Activated B cell treated with CpG ODN at 0.5 μM for 24 hours (primary cell): ENCODE measurements at regions of chr1 and their contacts with region 1.

Region 1: GRCh38 chr1:179081687-179082332 is at the start of gene TOR3A:
- DNase-seq: peak; percentile 82
- ATAC-seq: peak; percentile 79
- H3K4me3 Mint-ChIP-seq: peak within 1 kb of the TSS; percentile 98
- H3K27ac Mint-ChIP-seq: peak within 1 kb of the TSS; percentile 96
- H3K4me1 Mint-ChIP-seq: peaks cover 44% of the 10 kb centered on the region
- H3K27me3 Mint-ChIP-seq: no peaks in the 10 kb centered on the region
- CTCF ChIP-seq: no peak
- total RNA-seq, gene TOR3A: 59.5 and 60.8 TPM in 2 replicates

Region 2: DNA sequence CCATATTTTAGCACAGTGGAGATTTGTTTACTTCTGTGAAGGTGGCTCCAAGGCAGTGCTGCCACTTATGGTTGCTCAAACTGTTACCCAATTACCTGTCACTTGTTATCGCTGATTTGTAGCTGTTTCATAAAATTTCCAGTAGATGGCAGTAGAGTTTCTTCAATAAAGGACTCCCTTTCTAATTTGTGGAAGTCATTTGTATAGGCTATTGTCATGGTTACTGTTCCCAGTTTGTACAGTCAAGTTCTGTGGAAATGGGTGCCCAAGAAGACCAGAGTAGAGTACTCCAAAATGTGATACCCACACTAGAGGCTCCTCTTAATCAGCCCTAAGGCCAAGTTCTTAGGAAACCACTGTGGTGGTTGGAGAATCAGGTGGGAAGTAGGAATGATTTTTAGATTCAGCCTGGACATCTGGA is 771.1 kb before region 1 on chr1:
- CTCF ChIA-PET with region 1: no interaction called
- POLR2A ChIA-PET with region 1: no interaction called
- intact Hi-C with region 1: loop called (anchors 5 kb)
- DNase-seq: no peak
- ATAC-seq: peak; percentile 47
- H3K4me3 Mint-ChIP-seq: no peak overlapping the region
- H3K27ac Mint-ChIP-seq: no peak overlapping the region
- H3K4me1 Mint-ChIP-seq: no peaks in the 10 kb centered on the region
- H3K27me3 Mint-ChIP-seq: peaks cover 3% of the 10 kb centered on the region
- CTCF ChIP-seq: peak; percentile 74

Region 3: DNA sequence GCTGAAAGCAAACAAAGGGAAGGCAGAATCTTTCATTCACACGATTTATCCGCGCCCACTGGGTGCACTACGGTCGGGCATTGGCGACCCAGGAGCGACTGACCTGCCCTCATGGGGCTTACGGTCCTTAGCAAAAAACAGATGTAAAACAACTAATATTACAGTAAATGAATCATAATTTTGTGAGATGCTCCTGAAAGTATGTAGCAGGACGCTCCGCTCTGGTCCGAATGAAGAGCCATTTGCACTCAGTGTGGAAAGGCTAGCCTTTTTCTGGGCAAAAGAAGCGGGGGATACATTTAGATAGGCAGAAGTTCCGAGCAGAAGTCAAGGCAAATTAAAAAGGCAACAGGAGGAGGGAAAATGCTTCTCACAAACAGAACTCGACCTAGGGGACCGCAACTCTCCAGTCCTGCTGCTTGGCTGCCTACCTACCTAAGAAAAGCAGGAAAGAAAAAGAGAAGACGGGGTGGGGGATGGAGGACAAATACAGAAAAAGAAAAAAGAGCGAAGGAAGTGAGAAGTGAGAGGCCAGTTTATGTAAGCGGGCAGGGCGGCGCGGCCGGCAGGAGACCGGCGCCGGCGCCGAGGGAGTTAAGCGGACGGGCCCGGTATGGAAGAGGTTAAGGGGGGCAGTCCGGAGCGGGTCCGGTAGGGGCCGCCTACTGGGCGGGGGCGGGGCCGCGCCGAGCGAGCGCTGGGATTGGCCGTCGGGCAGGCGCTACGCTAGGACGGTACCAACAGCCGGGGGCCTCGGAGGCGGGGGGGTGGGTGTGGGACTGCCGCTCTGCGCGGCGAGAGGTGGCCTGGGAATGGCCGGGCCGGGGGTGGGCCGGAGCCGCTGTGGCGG is 56.5 kb before region 1 on chr1 and contains the start of gene FAM20B:
- CTCF ChIA-PET with region 1: no interaction called
- POLR2A ChIA-PET with region 1: interaction called, 23 read pairs
- intact Hi-C with region 1: loop called (anchors 1 kb)
- DNase-seq: peak; percentile 90
- ATAC-seq: peak; percentile 84
- H3K4me3 Mint-ChIP-seq: peak within 1 kb of the TSS; percentile 90
- H3K27ac Mint-ChIP-seq: peak within 1 kb of the TSS; percentile 90
- H3K4me1 Mint-ChIP-seq: peaks cover 43% of the 10 kb centered on the region
- H3K27me3 Mint-ChIP-seq: no peaks in the 10 kb centered on the region
- CTCF ChIP-seq: no peak
- total RNA-seq, gene FAM20B: 26.3 and 27.5 TPM in 2 replicates

Region 4: DNA sequence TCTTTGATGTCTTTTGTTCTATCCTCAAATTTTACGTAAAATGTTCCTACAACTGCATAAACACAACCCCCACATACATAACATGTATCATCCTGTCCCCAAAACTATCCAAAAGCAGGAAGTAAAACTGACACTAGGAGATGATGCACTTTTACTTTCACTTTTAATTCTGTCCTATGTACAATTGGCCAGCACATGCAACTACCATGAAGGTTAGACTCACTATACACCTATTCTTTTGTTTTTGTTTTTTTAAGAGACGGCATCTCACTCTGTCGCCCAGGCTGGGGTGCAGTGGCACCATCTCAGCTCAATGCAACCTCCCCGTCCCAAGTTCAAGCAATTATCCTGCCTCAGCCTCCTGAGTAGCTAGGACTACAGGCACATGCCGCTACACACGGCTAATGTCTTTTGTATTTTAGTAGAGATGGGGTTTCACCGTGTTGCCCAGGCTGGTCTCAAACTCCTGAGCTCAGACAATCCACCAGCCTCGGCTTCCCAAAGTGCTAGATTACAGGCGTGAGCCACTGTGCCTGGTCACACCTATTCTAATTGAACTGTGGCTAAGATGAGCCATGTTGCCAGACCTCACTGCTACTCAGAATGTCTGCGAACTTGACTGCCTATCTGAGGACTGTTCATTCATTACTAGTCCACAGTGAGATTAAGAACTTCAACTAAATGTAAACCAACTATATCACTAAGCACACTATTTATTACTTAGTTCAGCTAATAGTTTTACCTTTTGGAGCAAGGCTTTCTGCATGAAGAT is 48.1 kb after region 1 on chr1:
- CTCF ChIA-PET with region 1: no interaction called
- POLR2A ChIA-PET with region 1: no interaction called
- intact Hi-C with region 1: loop called (anchors 1 kb)
- DNase-seq: no peak
- ATAC-seq: peak; percentile 99
- H3K4me3 Mint-ChIP-seq: peak overlapping the region; percentile 45
- H3K27ac Mint-ChIP-seq: peak overlapping the region; percentile 79
- H3K4me1 Mint-ChIP-seq: peaks cover 13% of the 10 kb centered on the region
- H3K27me3 Mint-ChIP-seq: no peaks in the 10 kb centered on the region
- CTCF ChIP-seq: no peak

Region 5: DNA sequence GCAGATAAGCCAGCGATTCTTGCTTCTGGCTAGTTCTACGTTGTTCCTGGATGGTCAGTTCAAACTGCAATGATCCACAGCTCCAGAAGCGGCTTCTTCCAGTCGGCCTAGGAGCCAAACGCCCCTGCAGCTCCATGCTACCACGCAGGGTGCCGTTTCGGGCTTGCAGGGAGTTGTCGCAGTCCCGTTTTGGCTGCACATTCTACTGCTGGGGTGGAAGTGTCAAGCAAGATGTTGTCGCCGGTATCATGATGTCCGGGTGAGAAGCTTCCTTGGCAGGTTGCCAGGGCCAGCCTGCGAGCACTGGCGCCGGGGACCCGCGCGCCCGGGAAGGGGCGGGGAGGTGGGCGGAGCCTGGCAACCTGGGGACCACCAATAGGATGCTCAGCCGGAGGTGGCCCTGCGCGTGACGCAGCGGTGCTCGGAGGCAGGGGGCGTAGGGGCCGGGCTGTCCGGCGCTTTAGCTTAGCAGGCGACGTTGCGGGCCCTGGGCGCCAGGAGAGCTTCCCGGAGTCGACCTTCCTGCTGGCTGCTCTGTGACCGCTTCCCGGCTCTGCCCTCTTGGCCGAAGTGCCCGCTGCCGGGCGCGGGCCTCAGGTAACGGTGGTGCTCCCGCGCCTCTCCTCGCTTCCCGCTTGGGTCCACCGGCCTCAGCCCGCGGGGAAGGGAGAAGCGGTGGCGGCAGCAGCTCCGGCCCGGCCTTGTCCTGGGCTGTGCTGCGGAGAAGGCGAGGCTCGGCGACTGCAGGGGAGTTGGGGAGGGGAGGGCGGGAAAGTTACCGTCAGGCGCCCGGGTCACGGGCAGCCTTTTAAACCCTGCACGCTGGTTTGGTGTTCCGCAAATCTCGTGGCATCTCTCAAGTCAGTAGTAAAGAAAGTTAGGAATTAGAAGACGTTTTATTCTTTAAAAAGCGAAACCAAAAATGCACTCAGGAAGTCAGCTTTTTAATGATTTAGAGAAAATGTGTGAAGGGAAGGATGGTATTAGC is 211.8 kb after region 1 on chr1 and contains the start of gene SOAT1:
- CTCF ChIA-PET with region 1: interaction called, 5 read pairs
- POLR2A ChIA-PET with region 1: interaction called, 7 read pairs
- intact Hi-C with region 1: loop called (anchors 1 kb)
- DNase-seq: peak; percentile 92
- ATAC-seq: peak; percentile 99
- H3K4me3 Mint-ChIP-seq: peak within 1 kb of the TSS; percentile 97
- H3K27ac Mint-ChIP-seq: peak within 1 kb of the TSS; percentile 93
- H3K4me1 Mint-ChIP-seq: peaks cover 44% of the 10 kb centered on the region
- H3K27me3 Mint-ChIP-seq: no peaks in the 10 kb centered on the region
- CTCF ChIP-seq: no peak
- total RNA-seq, gene SOAT1: 17.3 and 20.0 TPM in 2 replicates

Region 6: GRCh38 chr1:179809506-179810366 is 727.9 kb after region 1 on chr1:
- CTCF ChIA-PET with region 1: interaction called, 30 read pairs
- POLR2A ChIA-PET with region 1: no interaction called
- intact Hi-C with region 1: loop called (anchors 1 kb)
- DNase-seq: peak; percentile 47
- ATAC-seq: peak; percentile 78
- H3K4me3 Mint-ChIP-seq: no peak overlapping the region
- H3K27ac Mint-ChIP-seq: no peak overlapping the region
- H3K4me1 Mint-ChIP-seq: peaks cover 11% of the 10 kb centered on the region
- H3K27me3 Mint-ChIP-seq: peaks cover 23% of the 10 kb centered on the region
- CTCF ChIP-seq: no peak